Pancreas (tissue), 10 donors: ENCODE measurements at regions of chr20 and their contacts with region 1.

Region 1: DNA sequence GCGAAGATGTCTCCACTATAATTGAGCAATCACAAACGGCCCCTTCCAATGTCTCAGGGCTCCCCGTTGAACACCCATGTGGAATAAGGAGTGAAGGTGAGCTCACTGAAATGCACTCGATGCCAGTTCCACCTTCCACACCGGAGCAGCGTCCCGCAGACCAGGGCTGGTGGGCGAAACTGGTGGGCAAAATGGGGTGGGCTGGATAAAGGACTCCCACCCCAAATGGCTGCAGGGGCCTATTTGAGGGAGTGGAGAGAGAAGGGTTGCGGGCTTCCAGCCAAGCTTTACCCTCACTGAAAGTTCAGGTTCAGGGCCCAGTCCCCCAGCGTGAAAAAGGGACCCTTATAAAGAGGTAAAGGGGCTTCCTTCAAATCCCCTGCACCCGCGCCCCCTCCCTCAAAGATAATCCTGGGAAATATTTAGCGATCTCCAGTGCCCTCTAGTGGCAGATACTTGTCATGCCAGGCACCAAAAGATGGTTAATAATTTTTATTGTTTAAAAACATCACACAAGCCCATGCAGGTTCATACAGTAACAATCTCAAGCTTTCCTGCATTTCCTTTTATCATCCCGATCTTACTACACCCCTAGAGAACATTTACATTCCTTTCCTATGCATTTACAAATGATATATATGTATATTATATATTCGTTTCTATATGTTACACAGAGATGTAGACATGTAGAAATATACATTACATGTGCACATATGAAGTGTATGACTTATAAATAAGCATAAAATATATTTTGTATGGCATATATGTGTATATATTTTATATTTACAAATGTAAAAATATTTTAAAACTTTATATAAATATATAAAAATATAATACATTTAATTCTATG is 58.2 kb upstream of the NKX2-2 start:
- DNase-seq: peak in 1 of 6 donors; percentile 9
- ATAC-seq: peak in 3 of 4 donors; percentile 42 to 66 (median 47)
- H3K4me3 ChIP-seq: no peak overlapping the region
- H3K27ac ChIP-seq: no peak overlapping the region
- H3K4me1 ChIP-seq: no peaks in the 10 kb centered on the region
- H3K27me3 ChIP-seq: peaks cover 0 to 14% (median 6%) of the 10 kb centered on the region in 4 donors
- CTCF ChIP-seq: peak; percentile 60 to 85 (median 82)

Region 2: DNA sequence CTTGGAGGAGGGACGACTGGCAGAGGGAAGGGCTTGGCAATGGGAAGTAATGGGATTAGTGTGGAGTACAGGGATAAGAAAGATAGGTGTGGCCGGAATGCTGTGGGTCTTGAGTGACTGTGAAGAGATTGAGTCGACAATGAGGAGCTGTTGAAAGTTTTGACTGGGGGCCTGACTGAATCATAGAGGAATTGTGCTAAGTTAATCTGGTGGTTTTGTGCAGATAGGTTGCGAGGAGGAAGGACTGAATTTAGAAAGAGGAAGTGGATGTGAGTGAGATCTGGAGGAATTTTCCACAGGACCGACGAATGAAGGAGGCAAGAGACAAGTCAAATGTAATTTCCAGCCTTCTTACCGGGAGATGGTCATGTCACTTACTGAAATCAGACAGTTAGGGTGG is 715.8 kb before region 1 on chr20:
- intact Hi-C with region 1: loop called in 1 of 3 experiments (anchors 10 kb)
- DNase-seq: no peak
- ATAC-seq: no peak
- H3K4me3 ChIP-seq: no peak overlapping the region
- H3K27ac ChIP-seq: no peak overlapping the region
- H3K4me1 ChIP-seq: no peaks in the 10 kb centered on the region
- H3K27me3 ChIP-seq: no peaks in the 10 kb centered on the region
- CTCF ChIP-seq: no peak

Region 3: DNA sequence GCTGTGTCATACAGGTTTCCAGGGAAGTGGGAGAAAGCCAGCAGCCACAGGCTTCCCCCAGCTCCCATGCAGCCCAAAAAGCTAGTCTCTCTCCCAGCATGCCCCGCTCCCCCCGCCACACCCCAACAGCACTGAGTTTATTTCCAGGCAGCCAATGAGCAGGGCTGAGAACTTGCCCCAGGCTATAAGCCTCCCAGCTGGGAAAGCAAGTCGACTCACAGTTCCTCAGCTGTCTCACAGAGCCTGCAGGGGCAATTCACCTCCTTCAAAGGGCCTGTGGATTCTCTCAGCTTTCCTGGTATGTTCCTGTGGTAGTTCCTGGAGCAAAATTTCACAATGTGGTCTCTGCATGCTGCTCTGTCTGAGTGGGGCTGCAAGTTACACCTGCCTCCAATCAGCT is 167.6 kb after region 1 on chr20:
- intact Hi-C with region 1: no loop called
- DNase-seq: no peak
- ATAC-seq: no peak
- H3K4me3 ChIP-seq: no peak overlapping the region
- H3K27ac ChIP-seq: no peak overlapping the region
- H3K4me1 ChIP-seq: no peaks in the 10 kb centered on the region
- H3K27me3 ChIP-seq: no peaks in the 10 kb centered on the region
- CTCF ChIP-seq: no peak